Sigmoid colon (tissue), 7 donors: ENCODE measurements at regions of chr7 and their contacts with region 1.

Region 1: DNA sequence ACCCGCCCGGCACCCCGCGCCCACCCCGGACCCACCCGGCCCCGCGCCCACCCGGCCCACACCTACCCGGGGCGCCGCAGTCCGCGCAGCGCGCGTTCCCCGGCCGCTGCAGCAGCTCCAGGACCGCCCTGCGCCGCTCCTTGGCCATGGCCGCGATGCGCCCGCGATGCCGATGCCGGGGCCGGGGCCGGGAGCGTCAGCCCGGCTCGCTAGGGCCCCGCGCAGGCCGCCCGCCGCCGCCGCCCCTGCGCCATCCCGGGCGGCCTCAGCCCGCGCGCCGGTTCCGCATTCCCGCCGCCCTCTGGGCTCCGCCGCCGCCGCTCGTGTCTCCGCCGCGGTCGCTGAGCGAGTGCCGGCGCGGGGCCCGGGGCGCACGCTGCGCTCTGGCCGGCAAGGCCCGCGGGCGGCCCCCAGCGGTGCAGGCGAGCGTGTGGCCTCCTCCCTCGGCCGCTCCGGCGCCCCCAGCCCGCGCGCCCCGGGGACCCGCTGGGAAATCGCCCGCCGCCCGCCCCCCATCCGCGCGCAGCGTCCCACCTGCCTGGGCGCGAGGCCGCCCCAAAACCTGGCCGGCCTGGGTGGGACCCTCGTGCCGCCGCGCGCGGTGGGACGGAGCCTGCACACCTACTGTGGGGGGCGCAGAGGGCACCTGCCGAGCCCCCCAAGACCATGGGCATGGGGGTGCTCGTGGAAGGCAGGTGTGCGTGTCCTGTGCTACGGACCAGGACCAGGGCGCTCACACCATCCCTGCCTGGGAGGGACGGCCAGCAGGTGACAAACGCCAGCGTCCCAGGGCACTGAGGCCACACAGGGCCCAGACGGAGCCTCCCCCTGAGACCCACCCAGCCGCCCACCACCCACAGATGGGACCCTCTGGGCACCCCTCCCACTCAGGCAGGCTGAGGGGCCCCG is at the start of gene ADAP1:
- DNase-seq: peak; percentile 67
- H3K4me3 ChIP-seq: peak within 1 kb of the TSS; percentile 43 to 78 (median 70)
- H3K27ac ChIP-seq: peak within 1 kb of the TSS; percentile 80 to 93 (median 89)
- H3K4me1 ChIP-seq: peaks cover 0 to 36% (median 25%) of the 10 kb centered on the region in 4 donors
- H3K27me3 ChIP-seq: no peaks in the 10 kb centered on the region
- CTCF ChIP-seq: no peak
- EP300 ChIP-seq: no peak
- POLR2A ChIP-seq: no peak
- total RNA-seq, gene ADAP1: 11.4 to 72.6 (median 28.9) TPM

Region 2: GRCh38 chr7:786472-787255 is 167.9 kb before region 1 on chr7:
- intact Hi-C with region 1: loop called (anchors 10 kb)
- DNase-seq: peak; percentile 90
- H3K4me3 ChIP-seq: no peak overlapping the region
- H3K27ac ChIP-seq: peak overlapping the region in 1 of 4 donors; percentile 22
- H3K4me1 ChIP-seq: peaks cover 0 to 28% (median 13%) of the 10 kb centered on the region in 4 donors
- H3K27me3 ChIP-seq: no peaks in the 10 kb centered on the region
- CTCF ChIP-seq: peak; percentile 90 to 93 (median 92)
- EP300 ChIP-seq: no peak
- POLR2A ChIP-seq: no peak

Region 3: GRCh38 chr7:816300-816750 is 138.3 kb before region 1 on chr7:
- intact Hi-C with region 1: loop called (anchors 10 kb)
- DNase-seq: peak; percentile 99
- H3K4me3 ChIP-seq: peak overlapping the region; percentile 23 to 94 (median 84)
- H3K27ac ChIP-seq: peak overlapping the region; percentile 84 to 99 (median 92)
- H3K4me1 ChIP-seq: peaks cover 0 to 74% (median 60%) of the 10 kb centered on the region in 4 donors
- H3K27me3 ChIP-seq: no peaks in the 10 kb centered on the region
- CTCF ChIP-seq: no peak
- EP300 ChIP-seq: no peak
- POLR2A ChIP-seq: peak in 1 of 2 donors; percentile 20

Region 4: GRCh38 chr7:867672-868486 is 86.7 kb before region 1 on chr7:
- intact Hi-C with region 1: no loop called
- DNase-seq: peak; percentile 95
- H3K4me3 ChIP-seq: no peak overlapping the region
- H3K27ac ChIP-seq: peak overlapping the region; percentile 78 to 96 (median 88)
- H3K4me1 ChIP-seq: peaks cover 0 to 32% (median 22%) of the 10 kb centered on the region in 4 donors
- H3K27me3 ChIP-seq: no peaks in the 10 kb centered on the region
- CTCF ChIP-seq: no peak
- EP300 ChIP-seq: peak in 1 of 4 donors; percentile 15
- POLR2A ChIP-seq: no peak

Region 5: DNA sequence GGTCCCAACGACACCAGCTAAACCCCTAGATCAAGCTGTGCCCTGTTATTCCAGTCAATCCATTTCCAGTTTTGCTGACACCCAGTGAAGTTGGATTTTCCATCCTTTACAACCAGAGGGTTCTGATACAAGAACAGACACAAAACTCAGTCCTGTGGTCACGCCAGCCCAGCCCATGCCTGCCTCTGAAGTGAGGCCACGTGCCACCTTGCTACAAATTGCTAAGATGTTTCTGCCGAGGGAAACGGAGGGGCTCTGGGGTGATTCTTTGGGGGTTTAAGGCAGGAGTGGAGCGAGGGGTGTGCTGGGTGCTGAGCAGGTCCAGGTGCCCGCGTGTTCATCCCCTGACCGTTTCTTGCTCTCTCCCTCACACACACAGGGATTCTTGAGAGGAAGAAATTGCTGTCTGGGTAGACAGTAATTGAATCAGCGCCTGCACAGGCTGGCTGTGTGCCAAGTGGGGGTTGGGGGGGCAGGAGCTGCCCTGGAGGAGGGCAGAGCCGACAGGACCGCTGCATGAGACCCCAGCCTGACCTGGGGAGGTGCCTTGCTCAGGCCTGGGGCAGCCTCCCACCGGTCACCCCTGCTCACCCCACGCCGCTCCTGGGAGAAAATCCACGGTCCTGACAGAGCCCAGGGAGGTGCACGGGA is 38.2 kb before region 1 on chr7:
- intact Hi-C with region 1: loop called (anchors 5 kb)
- DNase-seq: peak; percentile 67
- H3K4me3 ChIP-seq: no peak overlapping the region
- H3K27ac ChIP-seq: no peak overlapping the region
- H3K4me1 ChIP-seq: peaks cover 0 to 14% (median 10%) of the 10 kb centered on the region in 4 donors
- H3K27me3 ChIP-seq: no peaks in the 10 kb centered on the region
- CTCF ChIP-seq: no peak
- EP300 ChIP-seq: no peak
- POLR2A ChIP-seq: no peak

Region 6: DNA sequence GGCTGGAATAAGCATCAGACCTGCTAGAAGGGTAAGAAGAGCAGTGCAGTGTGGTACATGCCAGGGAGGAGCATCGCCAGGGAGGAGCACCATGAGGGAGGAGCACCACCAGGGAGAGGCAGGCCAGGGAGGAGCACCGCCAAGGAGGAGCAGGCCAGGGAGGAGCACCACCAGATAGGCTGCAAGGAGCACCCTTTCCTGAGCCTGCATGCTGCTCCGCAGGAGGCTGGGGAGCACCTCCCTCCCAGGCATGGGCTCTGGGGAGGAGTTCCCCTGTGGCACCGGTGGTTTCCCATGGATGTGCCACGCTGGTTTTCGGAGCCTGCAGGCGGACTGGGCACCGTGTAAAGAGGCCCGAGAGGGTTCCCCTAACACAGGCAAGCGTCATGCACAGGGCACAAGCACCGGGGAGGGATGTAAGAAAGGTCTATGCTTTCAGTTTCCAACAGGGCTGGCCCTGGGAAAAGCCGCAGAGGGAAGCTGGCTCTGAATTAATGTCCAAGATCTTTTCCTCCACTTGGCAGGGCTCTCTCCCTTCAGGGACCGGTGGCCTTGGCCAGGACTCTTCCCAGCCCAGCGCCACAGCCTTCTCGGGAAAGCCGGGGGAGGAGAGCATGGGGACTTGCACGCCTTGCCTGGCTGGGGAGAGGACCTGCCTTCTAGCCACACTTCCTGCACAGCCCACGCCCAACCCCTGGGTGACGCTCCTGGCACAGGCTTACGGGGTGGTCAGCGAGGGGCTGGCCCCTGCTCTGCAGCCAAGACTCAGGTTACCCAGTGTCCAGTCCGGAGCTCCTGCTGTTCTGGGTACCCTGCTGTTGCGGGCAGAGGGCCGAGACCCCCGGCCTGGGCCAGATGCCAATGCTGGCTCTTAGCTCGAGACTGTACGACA is 121.8 kb after region 1 on chr7:
- intact Hi-C with region 1: no loop called
- DNase-seq: no peak
- H3K4me3 ChIP-seq: no peak overlapping the region
- H3K27ac ChIP-seq: peak overlapping the region in 2 of 4 donors; percentile 16 to 27
- H3K4me1 ChIP-seq: peaks cover 0 to 11% (median 2%) of the 10 kb centered on the region in 4 donors
- H3K27me3 ChIP-seq: no peaks in the 10 kb centered on the region
- CTCF ChIP-seq: no peak
- EP300 ChIP-seq: no peak
- POLR2A ChIP-seq: no peak